ENCODE measurements at regions of chr3 and their contacts with region 1.

Region 1: DNA sequence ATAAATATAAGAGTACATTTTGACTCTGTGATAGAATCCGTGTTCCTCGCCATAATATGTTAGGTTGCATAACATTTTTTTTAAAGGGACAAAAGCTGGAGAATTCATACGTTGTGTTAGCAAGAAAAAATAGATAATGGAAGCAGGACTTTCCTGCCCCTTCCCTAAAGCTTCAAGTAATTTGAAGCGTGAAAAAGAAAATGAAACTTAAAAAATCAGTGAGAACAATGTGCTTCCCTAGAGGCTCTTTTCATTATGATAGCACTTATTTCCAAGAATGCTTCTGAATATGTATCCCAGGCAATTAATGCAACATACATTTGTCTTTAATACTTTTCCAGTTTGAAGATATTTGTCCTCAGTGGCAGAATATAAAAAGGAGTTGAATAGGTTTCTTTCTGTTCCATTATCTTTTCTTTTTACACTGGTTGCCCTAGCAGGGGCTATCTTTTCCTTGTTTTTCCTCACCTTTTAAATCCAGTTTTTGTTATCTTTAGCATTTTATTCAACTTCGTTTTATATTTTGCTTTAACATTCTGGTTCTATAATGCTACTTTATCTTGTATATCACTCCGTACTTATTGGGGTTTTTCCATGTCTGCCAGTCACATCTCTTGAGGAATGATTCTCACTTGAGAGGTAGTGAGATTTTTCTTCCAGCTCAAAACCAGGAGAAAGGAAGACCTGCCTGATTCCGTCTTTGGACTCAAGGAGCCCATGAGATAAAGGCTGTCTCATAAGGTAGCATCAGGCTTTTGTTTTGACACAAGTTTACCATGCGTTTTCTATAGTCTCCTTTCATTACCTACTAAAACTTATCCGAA is 113.8 kb downstream of the MBNL1 start:
- DNase-seq: no peak
- H3K4me3 Mint-ChIP-seq: peak overlapping the region; percentile 71
- H3K27ac Mint-ChIP-seq: peak overlapping the region; percentile 89
- H3K4me1 Mint-ChIP-seq: peaks cover 77% of the 10 kb centered on the region
- H3K27me3 Mint-ChIP-seq: no peaks in the 10 kb centered on the region

Region 2: DNA sequence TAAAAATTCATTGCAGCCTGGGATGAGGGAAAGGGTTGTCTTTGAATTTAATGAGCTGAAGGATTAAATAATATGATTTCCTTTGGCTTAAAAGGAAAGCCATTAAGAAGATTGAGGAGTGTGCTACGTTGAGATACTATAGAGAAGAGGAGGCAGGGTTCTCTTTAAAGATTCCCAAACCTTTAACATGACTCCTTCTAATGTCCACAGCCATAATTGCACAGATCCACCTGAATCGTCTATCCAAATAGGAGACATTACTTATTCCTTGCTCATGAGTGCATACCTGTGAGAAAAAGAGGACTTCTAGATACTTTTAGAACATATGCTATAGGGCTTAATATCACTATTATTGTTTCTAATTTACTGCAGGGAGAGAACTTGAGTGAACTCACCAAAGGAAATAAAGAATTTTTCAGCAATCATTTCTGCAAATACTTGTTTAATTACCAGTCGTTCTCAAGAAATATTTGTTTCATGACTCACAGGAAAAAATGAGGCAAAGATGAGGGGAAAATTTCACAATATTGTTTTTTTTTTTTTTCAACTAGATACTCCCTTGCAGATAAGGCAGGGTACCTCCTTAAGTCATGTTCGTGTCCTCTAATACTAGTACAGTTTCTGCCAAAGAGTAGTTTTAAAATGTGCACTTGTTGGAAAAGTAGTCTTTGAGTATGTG is 518.0 kb before region 1 on chr3:
- CTCF ChIA-PET with region 1: no interaction called
- intact Hi-C with region 1: no loop called
- DNase-seq: no peak
- H3K4me3 Mint-ChIP-seq: no peak overlapping the region
- H3K27ac Mint-ChIP-seq: no peak overlapping the region
- H3K4me1 Mint-ChIP-seq: no peaks in the 10 kb centered on the region
- H3K27me3 Mint-ChIP-seq: no peaks in the 10 kb centered on the region

Region 3: GRCh38 chr3:152365766-152366593 is 16.5 kb before region 1 on chr3:
- CTCF ChIA-PET with region 1: interaction called, 4 read pairs
- intact Hi-C with region 1: loop called (anchors 2 kb)
- DNase-seq: no peak
- H3K4me3 Mint-ChIP-seq: no peak overlapping the region
- H3K27ac Mint-ChIP-seq: no peak overlapping the region
- H3K4me1 Mint-ChIP-seq: peaks cover 79% of the 10 kb centered on the region
- H3K27me3 Mint-ChIP-seq: no peaks in the 10 kb centered on the region

Region 4: DNA sequence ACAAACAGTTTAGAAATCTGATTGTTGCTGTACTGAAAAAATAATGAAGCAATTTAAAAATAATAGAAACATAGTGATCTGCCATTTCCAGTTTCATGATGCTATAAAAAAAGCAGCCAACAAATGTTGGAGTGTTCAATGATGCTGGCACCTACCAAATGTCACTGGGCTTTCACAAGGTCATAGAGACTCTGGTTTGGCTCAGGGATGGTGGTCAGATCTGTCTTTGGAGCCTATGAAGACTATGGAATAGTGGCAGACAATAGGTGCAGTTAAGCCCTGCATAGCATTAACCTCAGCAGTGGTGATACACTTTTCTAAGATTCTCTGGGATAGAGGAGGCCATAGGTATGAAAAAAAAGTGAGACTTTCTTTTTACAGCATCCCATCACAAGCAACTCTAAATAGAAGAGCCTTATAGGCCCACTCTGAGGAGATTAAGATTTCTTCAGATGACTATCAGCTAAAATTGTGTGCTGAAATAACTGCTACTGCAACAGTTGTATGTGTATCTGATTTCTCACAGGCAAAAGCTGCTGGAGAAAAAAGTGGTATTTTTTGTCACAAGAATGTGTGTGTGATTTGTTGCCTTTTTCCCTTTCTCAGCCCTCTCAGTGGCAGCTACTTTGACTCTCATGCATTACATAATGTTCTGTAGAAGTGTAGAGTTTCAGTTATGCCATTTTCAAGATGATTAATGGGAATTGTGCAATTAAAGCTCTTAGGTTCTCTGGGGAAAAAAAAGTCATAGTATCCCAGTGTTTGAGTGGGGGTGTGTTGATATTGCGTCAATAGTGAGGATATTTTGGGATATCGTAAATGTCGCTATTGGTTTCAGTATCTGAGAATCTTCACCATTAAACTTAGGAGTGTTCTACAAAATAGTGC is 23.6 kb after region 1 on chr3:
- CTCF ChIA-PET with region 1: no interaction called
- intact Hi-C with region 1: loop called (anchors 2 kb)
- DNase-seq: no peak
- H3K4me3 Mint-ChIP-seq: no peak overlapping the region
- H3K27ac Mint-ChIP-seq: peak overlapping the region; percentile 73
- H3K4me1 Mint-ChIP-seq: peaks cover 74% of the 10 kb centered on the region
- H3K27me3 Mint-ChIP-seq: no peaks in the 10 kb centered on the region

Region 5: GRCh38 chr3:152436707-152437590 is 54.4 kb after region 1 on chr3:
- CTCF ChIA-PET with region 1: interaction called, 3 read pairs
- intact Hi-C with region 1: loop called (anchors 2 kb)
- DNase-seq: no peak
- H3K4me3 Mint-ChIP-seq: no peak overlapping the region
- H3K27ac Mint-ChIP-seq: peak overlapping the region; percentile 68
- H3K4me1 Mint-ChIP-seq: peaks cover 66% of the 10 kb centered on the region
- H3K27me3 Mint-ChIP-seq: no peaks in the 10 kb centered on the region

Measured in activated naive CD4-positive, alpha-beta T cell treated with anti-CD3 and anti-CD28 coated beads for 36 hours (primary cell).